Motor neuron (in vitro differentiated cells): ENCODE measurements at regions of chr6 and their contacts with region 1.

Region 1: GRCh38 chr6:83417880-83418663 is 12.8 kb downstream of the ME1 start:
- ATAC-seq: peak in 5 of 8 experiments; percentile 35 to 81 (median 77)
- H3K4me3 ChIP-seq: no peak overlapping the region
- H3K27ac ChIP-seq: no peak overlapping the region
- H3K4me1 ChIP-seq: no peaks in the 10 kb centered on the region

Region 2: GRCh38 chr6:82875573-82876185 is 542.4 kb before region 1 on chr6:
- in situ Hi-C with region 1: no loop called
- ATAC-seq: peak in 6 of 8 experiments; percentile 35 to 85 (median 44)
- H3K4me3 ChIP-seq: no peak overlapping the region
- H3K27ac ChIP-seq: no peak overlapping the region
- H3K4me1 ChIP-seq: peaks cover 1 to 2% of the 10 kb centered on the region in 2 donors

Region 3: GRCh38 chr6:83231146-83231545 is 186.9 kb before region 1 on chr6:
- in situ Hi-C with region 1: loop called in 1 of 9 experiments (anchors 25 kb)
- ATAC-seq: peak in 2 of 8 experiments; percentile 34 to 62
- H3K4me3 ChIP-seq: no peak overlapping the region
- H3K27ac ChIP-seq: no peak overlapping the region
- H3K4me1 ChIP-seq: no peaks in the 10 kb centered on the region